ENCODE measurements at regions of chr9 and their contacts with region 1.

Region 1: DNA sequence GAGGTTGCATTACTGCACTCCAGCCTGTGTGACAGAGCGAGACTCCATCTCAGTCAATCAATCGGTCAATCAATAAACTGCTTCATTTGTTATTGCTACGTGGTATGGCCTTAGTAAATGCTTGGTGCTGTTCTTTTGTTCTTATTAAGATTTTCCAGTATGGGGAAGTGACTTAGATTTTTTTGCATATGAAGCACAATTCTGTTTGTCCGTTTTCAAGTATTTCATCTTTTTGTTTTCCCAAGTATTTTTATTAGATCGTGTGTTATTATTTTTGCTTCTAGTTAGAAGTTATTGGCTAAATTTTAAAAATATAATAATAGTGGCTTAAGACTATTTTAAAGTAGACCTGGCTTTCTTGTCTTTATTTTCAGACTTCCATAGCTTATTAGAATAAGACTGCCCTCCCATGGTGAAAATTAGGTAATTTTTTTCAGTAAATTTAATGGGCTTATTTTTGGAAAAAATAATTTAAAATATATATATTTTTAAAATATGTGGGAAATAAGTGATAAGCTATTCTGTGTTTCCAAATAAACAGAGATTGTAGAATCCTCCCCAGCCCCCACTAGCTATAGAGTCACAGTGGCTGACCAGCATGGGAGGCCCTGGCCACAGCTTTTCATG is 14.7 kb upstream of the OMD start:
- DNase-seq: peak; percentile 53
- ATAC-seq: no peak
- H3K4me3 ChIP-seq: no peak overlapping the region
- H3K27ac ChIP-seq: no peak overlapping the region
- H3K4me1 ChIP-seq: peaks cover 2% of the 10 kb centered on the region; the same call in 1 of the 2 replicates
- H3K27me3 ChIP-seq: no peaks in the 10 kb centered on the region
- CTCF ChIP-seq: peak; percentile 57
- POLR2A ChIP-seq: no peak
- RAD21 ChIP-seq: peak; percentile 66

Region 2: GRCh38 chr9:92133949-92134604 is 304.9 kb before region 1 on chr9:
- CTCF ChIA-PET with region 1: interaction called, 6 read pairs
- POLR2A ChIA-PET with region 1: no interaction called
- dilution Hi-C with region 1: no loop called
- in situ Hi-C with region 1: loop called (anchors 10 kb)
- intact Hi-C with region 1: loop called (anchors 2 kb)
- DNase-seq: peak; percentile 77
- ATAC-seq: peak; percentile 80
- H3K4me3 ChIP-seq: no peak overlapping the region
- H3K27ac ChIP-seq: peak overlapping the region; percentile 28
- H3K4me1 ChIP-seq: peaks cover 15% of the 10 kb centered on the region
- H3K27me3 ChIP-seq: no peaks in the 10 kb centered on the region
- CTCF ChIP-seq: peak; percentile 93
- POLR2A ChIP-seq: no peak
- RAD21 ChIP-seq: peak; percentile 85

Region 3: DNA sequence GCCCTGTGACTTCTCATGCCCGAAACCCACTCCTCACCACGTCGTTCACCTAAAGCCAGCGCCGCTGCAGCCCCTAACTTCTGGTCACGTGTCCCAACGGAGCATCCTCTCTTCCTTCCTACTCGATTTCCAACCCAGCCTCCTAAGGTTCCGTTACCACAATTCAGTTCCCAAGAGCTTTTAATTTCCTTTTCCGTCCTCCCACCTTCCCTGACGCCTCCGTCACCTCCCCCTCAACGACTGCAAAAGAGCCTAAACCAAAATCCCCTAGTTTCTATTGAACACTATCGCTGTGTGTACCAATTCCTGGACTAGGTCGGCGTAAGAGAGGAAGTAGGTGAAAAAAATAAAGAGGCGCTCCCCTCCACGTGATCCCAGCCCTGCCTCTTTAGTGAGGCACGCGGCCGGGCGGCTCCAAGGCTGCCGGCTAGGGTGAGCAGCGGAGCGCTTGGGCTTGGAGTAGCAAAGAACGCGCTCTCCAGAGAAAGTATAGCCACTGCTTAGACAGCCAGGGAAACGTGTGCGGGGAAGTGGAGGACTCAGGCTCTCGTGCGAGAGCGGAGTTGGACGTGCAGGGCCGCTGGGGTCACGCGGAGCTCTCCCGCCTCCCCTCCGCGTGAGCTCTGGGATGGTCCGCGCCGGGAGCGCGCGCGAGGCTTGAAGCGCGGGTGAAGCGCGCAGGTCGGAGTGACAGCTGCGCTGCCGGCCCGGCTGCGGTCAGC is 113.6 kb before region 1 on chr9 and contains the starts of genes CENPP and NOL8:
- CTCF ChIA-PET with region 1: interaction called, 5 read pairs
- POLR2A ChIA-PET with region 1: no interaction called
- dilution Hi-C with region 1: no loop called
- in situ Hi-C with region 1: loop called (anchors 5 kb)
- intact Hi-C with region 1: loop called (anchors 1 kb)
- DNase-seq: peak; percentile 86
- ATAC-seq: peak; percentile 95
- H3K4me3 ChIP-seq: peak within 1 kb of the TSS; percentile 64
- H3K27ac ChIP-seq: peak within 1 kb of the TSS; percentile 96
- H3K4me1 ChIP-seq: no peaks in the 10 kb centered on the region
- H3K27me3 ChIP-seq: no peaks in the 10 kb centered on the region
- CTCF ChIP-seq: no peak
- POLR2A ChIP-seq: peak; percentile 75; the same call in 1 of the 2 replicates
- RAD21 ChIP-seq: peak; percentile 9; the same call in 1 of the 2 replicates
- total RNA-seq, gene CENPP: 1.4 and 3.6 TPM in 2 replicates
- total RNA-seq, gene NOL8: 18.3 and 23.6 TPM in 2 replicates

Region 4: GRCh38 chr9:92342825-92343488 is 96.1 kb before region 1 on chr9:
- CTCF ChIA-PET with region 1: interaction called, 6 read pairs
- POLR2A ChIA-PET with region 1: no interaction called
- dilution Hi-C with region 1: no loop called
- in situ Hi-C with region 1: no loop called
- intact Hi-C with region 1: loop called (anchors 2 kb)
- DNase-seq: peak; percentile 9
- ATAC-seq: peak; percentile 48; the same call in 1 of the 2 replicates
- H3K4me3 ChIP-seq: no peak overlapping the region
- H3K27ac ChIP-seq: no peak overlapping the region
- H3K4me1 ChIP-seq: peaks cover 2% of the 10 kb centered on the region; the same call in 1 of the 2 replicates
- H3K27me3 ChIP-seq: no peaks in the 10 kb centered on the region
- CTCF ChIP-seq: peak; percentile 38
- POLR2A ChIP-seq: no peak
- RAD21 ChIP-seq: peak; percentile 30

Region 5: GRCh38 chr9:92481040-92481633 is 42.1 kb after region 1 on chr9:
- CTCF ChIA-PET with region 1: no interaction called
- POLR2A ChIA-PET with region 1: no interaction called
- dilution Hi-C with region 1: no loop called
- in situ Hi-C with region 1: no loop called
- intact Hi-C with region 1: no loop called
- DNase-seq: no peak
- ATAC-seq: no peak; the same call in 1 of the 2 replicates
- H3K4me3 ChIP-seq: no peak overlapping the region
- H3K27ac ChIP-seq: no peak overlapping the region; the same call in 1 of the 2 replicates
- H3K4me1 ChIP-seq: peaks cover 18% of the 10 kb centered on the region
- H3K27me3 ChIP-seq: no peaks in the 10 kb centered on the region
- CTCF ChIP-seq: no peak
- POLR2A ChIP-seq: no peak
- RAD21 ChIP-seq: no peak

Region 6: GRCh38 chr9:92634712-92635605 is 195.9 kb after region 1 on chr9:
- CTCF ChIA-PET with region 1: no interaction called
- POLR2A ChIA-PET with region 1: no interaction called
- dilution Hi-C with region 1: no loop called
- in situ Hi-C with region 1: loop called (anchors 10 kb)
- intact Hi-C with region 1: loop called (anchors 2 kb)
- DNase-seq: peak; percentile 70
- ATAC-seq: peak; percentile 99
- H3K4me3 ChIP-seq: no peak overlapping the region
- H3K27ac ChIP-seq: no peak overlapping the region
- H3K4me1 ChIP-seq: no peaks in the 10 kb centered on the region
- H3K27me3 ChIP-seq: no peaks in the 10 kb centered on the region
- CTCF ChIP-seq: peak; percentile 99
- POLR2A ChIP-seq: peak; percentile 50; the same call in 1 of the 2 replicates
- RAD21 ChIP-seq: peak; percentile 98